Endothelial cell of umbilical vein (primary cell): ENCODE measurements at regions of chr2 and their contacts with region 1.

Region 1: DNA sequence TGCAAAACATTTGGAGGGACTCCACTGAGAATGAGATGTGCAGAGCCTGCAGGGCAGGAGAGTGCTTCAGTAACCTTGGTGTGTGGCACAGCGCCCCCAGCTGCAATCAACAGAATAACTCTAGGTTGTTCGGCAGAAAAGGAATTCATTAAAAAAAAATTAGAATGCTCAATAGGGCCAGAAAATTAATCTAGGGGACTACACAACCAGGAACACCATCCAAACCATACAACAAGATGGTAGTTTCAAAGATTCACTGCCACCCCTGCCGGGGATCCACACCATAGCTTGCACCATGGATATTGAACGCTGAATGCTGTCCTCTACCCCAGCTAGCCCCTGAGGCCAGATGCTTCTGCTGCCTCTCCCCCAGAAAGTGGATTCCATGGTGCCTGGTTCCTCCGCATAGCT is 50.1 kb downstream of the THUMPD2 start:
- DNase-seq: peak; percentile 17
- H3K4me3 ChIP-seq: no peak overlapping the region
- H3K27ac ChIP-seq: no peak overlapping the region
- H3K4me1 ChIP-seq: peaks cover 6% of the 10 kb centered on the region
- H3K27me3 ChIP-seq: peaks cover 0 to 2% of the 10 kb centered on the region in 2 experiments
- CTCF ChIP-seq: peak; percentile 77 to 88
- POLR2A ChIP-seq: no peak

Region 2: GRCh38 chr2:39069136-39069515 is 659.8 kb before region 1 on chr2:
- CTCF ChIA-PET with region 1: no interaction called
- POLR2A ChIA-PET with region 1: no interaction called
- dilution Hi-C with region 1: no loop called
- intact Hi-C with region 1: loop called (anchors 10 kb)
- DNase-seq: no peak
- H3K4me3 ChIP-seq: no peak overlapping the region
- H3K27ac ChIP-seq: no peak overlapping the region
- H3K4me1 ChIP-seq: no peaks in the 10 kb centered on the region
- H3K27me3 ChIP-seq: no peaks in the 10 kb centered on the region
- CTCF ChIP-seq: no peak
- POLR2A ChIP-seq: no peak

Region 3: DNA sequence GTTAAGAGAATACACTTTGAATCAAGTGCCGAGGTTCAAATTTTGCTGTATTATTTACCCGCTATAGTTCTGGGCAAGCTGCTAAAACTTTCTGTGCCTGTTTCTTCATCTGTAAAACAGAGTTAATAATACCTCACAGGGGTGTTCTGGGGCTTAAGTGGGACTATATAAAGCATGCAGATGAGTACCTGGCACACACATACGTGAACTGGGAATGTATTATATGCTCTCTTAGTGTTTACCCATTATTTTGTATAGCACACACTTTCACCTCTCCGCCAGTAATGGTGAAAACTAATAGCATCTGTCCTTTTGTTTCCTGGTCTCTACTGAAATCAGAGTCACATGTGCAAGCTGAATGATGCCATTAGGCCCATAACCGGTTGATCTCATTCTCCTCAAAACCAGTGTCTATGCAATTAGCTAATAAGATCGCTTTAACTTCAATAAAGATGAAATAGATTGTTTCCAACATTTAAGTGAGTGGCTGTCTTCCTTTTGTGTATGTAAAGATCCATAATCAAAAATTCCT is 481.4 kb before region 1 on chr2:
- CTCF ChIA-PET with region 1: interaction called, 3 read pairs
- POLR2A ChIA-PET with region 1: no interaction called
- dilution Hi-C with region 1: no loop called
- intact Hi-C with region 1: loop called (anchors 5 kb)
- DNase-seq: no peak
- H3K4me3 ChIP-seq: no peak overlapping the region
- H3K27ac ChIP-seq: no peak overlapping the region
- H3K4me1 ChIP-seq: no peaks in the 10 kb centered on the region
- H3K27me3 ChIP-seq: no peaks in the 10 kb centered on the region
- CTCF ChIP-seq: no peak
- POLR2A ChIP-seq: no peak

Region 4: DNA sequence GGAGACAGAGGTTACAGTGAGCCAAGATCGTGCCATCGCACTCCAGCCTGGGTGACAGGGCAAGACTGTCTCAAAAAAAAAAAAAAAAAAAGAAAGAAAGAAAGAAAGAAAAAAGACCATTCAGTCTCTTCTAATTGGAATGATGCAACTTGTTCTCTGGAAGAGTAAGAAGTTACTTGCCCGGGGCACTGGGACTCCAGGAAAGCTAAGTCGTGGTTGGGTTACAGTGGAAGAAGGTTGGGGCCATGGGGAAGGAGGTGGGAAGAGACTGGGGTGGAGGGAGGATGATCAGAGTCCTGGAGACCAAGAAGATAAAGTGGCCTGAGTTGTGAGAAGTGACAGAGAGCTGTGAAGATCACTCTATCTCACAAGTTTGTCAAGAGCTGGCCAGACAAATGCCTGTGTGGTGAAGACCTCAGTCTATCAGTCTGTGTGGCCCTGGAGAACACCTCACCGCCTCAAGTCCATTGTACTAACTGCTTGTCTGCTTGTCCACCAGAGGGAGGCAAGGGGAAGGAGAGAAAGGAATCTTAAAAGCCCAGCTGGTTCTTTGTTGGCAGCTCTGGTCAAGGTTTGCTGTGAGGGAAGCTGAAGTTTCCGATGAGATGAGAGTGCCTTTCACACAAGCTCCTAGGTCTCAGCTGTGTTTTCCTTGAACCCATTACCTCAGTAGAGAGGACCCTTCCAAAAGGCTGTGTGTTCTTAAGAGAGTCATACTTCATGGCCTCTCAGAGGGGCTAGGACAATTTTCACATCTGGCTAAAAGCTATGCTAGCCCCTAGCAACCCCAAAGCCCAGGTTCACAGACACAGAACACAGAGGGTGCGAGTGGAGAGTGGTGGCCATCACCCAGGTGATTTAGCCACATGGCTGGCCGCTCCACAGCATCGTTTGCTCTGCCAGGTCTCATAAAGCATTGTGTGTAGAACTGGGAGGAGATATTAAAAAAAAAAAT is 135.2 kb before region 1 on chr2:
- CTCF ChIA-PET with region 1: interaction called, 55 read pairs
- POLR2A ChIA-PET with region 1: no interaction called
- dilution Hi-C with region 1: no loop called
- intact Hi-C with region 1: loop called (anchors 5 kb)
- DNase-seq: peak; percentile 74
- H3K4me3 ChIP-seq: no peak overlapping the region
- H3K27ac ChIP-seq: no peak overlapping the region
- H3K4me1 ChIP-seq: no peaks in the 10 kb centered on the region
- H3K27me3 ChIP-seq: no peaks in the 10 kb centered on the region
- CTCF ChIP-seq: peak; percentile 48 to 71
- POLR2A ChIP-seq: no peak

Region 5: DNA sequence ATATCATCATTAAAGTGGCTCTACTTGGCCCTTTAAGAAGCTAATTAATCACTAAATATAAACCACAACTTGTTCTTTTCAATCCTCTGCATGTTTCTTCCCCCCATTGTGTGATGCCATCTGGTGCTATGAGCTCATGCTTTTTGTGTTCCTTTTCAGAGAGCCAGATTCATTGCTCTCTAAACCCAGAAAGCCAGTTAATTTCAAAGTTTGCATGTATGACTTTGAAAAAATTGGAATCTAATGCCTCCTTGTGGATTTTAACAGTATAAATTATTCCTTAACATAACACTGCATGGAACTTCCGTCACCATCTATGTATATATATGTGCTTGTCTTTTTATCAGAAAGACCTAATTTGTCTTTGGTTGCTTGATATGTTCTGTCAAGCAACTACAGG is 32.1 kb before region 1 on chr2:
- CTCF ChIA-PET with region 1: interaction called, 35 read pairs
- POLR2A ChIA-PET with region 1: no interaction called
- dilution Hi-C with region 1: no loop called
- intact Hi-C with region 1: loop called (anchors 1 kb)
- DNase-seq: peak; percentile 84
- H3K4me3 ChIP-seq: no peak overlapping the region
- H3K27ac ChIP-seq: peak overlapping the region; percentile 13
- H3K4me1 ChIP-seq: peaks cover 18% of the 10 kb centered on the region
- H3K27me3 ChIP-seq: no peaks in the 10 kb centered on the region
- CTCF ChIP-seq: peak in 1 of 2 donors; percentile 17
- POLR2A ChIP-seq: no peak